H1 (cell line): ENCODE measurements at regions of chr14 and their contacts with region 1.

Region 1: DNA sequence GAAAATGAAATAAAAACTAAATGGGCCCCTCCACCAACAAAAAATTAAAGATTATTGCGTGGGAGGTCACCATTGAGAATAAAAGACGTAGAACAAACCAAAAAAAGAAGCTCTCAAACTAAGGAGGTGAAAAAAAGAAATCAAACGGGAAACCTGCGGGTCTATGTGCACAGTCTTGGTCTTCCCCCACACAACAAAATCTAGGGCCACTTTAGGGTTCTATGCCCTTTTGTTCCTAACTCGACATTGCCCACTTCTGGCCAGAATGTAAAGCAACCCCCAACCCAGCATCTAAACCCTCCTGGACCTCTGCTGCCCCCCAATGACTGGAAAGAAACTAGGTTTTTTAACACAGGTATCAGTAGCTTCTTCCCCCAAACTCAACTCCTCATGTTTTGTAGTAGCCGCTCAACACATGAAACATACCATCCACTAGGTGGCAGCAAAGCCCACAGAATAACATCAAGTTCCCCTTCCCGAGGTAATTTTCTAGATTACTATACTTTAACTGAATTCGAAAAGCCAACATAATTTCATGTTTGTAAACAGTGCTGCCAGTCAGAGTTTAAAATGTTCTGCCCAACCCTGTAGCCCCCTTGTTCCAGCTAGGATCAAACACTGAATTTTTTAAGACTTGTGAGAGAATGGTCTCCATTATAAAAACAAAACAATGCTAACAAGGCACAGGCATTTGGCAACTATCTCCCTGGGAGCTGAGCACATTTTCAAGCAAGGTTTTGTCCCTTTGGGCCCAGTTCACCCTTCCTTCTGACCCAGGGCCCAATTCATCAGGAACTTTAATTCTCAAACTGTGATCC is 18.7 kb downstream of the DAD1 start:
- DNase-seq: peak; percentile 78 to 79
- H3K4me3 ChIP-seq: peak overlapping the region in 1 of 4 experiments; percentile 26; a peak in 1 of 8 replicates
- H3K27ac ChIP-seq: peak overlapping the region; percentile 66
- H3K4me1 ChIP-seq: peaks cover 0 to 5% (median 1%) of the 10 kb centered on the region in 4 experiments; a peak in 3 of 7 replicates
- H3K27me3 ChIP-seq: no peaks in the 10 kb centered on the region
- CTCF ChIP-seq: peak; percentile 63 to 100 (median 97)
- EP300 ChIP-seq: peak in 1 of 2 experiments; percentile 73; a peak in 1 of 3 replicates
- POLR2A ChIP-seq: no peak
- RAD21 ChIP-seq: peak; percentile 83 to 89

Region 2: GRCh38 chr14:22472935-22473854 is 97.1 kb before region 1 on chr14:
- CTCF ChIA-PET with region 1: interaction called, 11 read pairs
- POLR2A ChIA-PET with region 1: no interaction called
- DNase-seq: peak in 1 of 2 experiments; percentile 66
- H3K4me3 ChIP-seq: no peak overlapping the region
- H3K27ac ChIP-seq: no peak overlapping the region
- H3K4me1 ChIP-seq: peaks cover 0 to 4% (median under 1%) of the 10 kb centered on the region in 4 experiments; a peak in 2 of 7 replicates
- H3K27me3 ChIP-seq: no peaks in the 10 kb centered on the region; a peak in 1 of 7 replicates
- CTCF ChIP-seq: peak in 2 of 3 experiments; percentile 63 to 75; a peak in 3 of 4 replicates
- EP300 ChIP-seq: no peak
- POLR2A ChIP-seq: no peak
- RAD21 ChIP-seq: peak; percentile 84 to 87

Region 3: GRCh38 chr14:22549981-22550673 is 20.2 kb before region 1 on chr14:
- CTCF ChIA-PET with region 1: interaction called, 38 read pairs
- POLR2A ChIA-PET with region 1: interaction called, 3 read pairs
- DNase-seq: peak in 1 of 2 experiments; percentile 43
- H3K4me3 ChIP-seq: no peak overlapping the region; a peak in 1 of 8 replicates
- H3K27ac ChIP-seq: peak overlapping the region; percentile 6; the same call in 1 of the 2 replicates
- H3K4me1 ChIP-seq: peaks cover 11 to 21% (median 14%) of the 10 kb centered on the region in 4 experiments
- H3K27me3 ChIP-seq: no peaks in the 10 kb centered on the region; a peak in 2 of 7 replicates
- CTCF ChIP-seq: no peak
- EP300 ChIP-seq: no peak
- POLR2A ChIP-seq: no peak
- RAD21 ChIP-seq: no peak

Region 4: DNA sequence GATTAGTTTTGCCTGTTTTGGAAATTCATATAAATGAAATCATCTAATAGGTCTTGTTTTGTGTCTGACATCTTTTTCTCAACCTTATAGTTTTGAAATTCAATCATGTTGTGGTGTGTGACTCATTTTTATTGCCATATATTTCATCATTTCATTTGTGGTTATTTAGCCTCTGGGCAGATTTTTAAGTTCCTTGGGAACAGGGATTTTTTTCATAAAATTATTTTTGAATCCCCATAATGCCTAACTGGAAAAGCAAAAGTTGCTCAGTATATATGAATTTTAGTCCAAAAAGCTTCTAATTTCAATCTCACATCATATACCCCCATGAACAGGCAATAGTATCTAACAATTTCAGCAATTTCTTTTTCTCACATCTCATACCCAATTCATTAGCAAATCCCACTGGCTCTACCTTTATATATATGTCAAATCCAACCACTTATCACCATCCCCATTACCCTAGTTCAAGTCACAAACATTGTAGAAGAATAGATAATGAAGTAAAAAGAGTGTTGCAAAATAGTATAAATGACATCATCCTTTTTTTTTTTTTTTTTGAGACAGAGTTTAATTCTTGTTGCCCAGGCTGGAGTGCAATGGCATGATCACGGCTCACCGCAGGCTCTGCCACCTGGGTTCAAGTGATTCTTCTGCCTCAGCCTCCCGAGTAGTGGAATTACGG is 76.4 kb after region 1 on chr14:
- CTCF ChIA-PET with region 1: interaction called, 78 read pairs
- POLR2A ChIA-PET with region 1: interaction called, 3 read pairs
- DNase-seq: no peak
- H3K4me3 ChIP-seq: no peak overlapping the region
- H3K27ac ChIP-seq: no peak overlapping the region
- H3K4me1 ChIP-seq: no peaks in the 10 kb centered on the region
- H3K27me3 ChIP-seq: no peaks in the 10 kb centered on the region
- CTCF ChIP-seq: no peak
- EP300 ChIP-seq: no peak
- POLR2A ChIP-seq: no peak
- RAD21 ChIP-seq: no peak

Region 5: GRCh38 chr14:22781586-22781991 is 211.2 kb after region 1 on chr14:
- CTCF ChIA-PET with region 1: interaction called, 13 read pairs
- POLR2A ChIA-PET with region 1: no interaction called
- DNase-seq: no peak
- H3K4me3 ChIP-seq: no peak overlapping the region
- H3K27ac ChIP-seq: no peak overlapping the region
- H3K4me1 ChIP-seq: no peaks in the 10 kb centered on the region; a peak in 1 of 7 replicates
- H3K27me3 ChIP-seq: no peaks in the 10 kb centered on the region
- CTCF ChIP-seq: no peak
- EP300 ChIP-seq: no peak
- POLR2A ChIP-seq: no peak
- RAD21 ChIP-seq: no peak

Region 6: DNA sequence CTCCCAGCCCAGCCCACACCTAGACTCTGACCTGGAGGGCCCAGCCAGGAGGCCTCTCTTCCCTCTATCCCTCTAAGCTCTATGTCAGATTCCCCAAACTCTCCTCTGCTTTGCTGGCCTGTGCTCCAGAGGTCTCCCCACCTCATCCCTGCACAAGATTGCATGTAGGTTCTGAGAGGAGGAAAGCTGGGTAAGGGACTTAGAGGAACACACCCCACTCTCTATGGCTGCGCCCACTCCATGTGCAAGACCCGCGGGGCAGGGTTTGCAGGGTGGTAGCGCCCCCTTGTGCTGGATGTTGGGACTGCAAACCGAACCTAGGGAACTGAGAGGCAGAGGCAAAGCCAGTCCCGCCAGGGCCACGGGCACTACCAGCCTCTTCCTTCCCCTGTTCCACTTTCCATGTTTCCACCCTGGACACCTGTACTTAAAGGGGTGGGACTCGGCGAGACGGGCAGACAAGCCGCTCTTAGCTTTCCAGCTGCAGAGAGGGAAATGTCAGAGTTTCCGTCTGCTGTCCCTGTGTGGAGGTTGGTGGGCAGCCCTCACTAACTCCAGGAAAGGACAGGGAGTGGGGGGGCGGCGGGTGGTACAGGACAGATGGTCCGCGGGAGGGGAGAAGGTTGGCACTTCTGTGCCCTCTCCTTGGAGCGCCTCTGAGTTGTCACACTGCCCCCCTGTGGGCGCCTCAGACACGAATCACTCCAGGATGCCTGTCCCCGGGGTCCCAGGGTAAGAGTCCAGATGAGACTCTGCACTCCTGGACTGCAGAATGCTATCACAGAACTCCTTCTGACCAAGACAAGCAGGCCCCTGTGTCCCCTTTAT is 282.8 kb after region 1 on chr14:
- CTCF ChIA-PET with region 1: interaction called, 23 read pairs
- POLR2A ChIA-PET with region 1: no interaction called
- DNase-seq: peak in 1 of 2 experiments; percentile 100
- H3K4me3 ChIP-seq: peak overlapping the region in 3 of 4 experiments; percentile 32 to 58 (median 42); a peak in 7 of 8 replicates
- H3K27ac ChIP-seq: no peak overlapping the region
- H3K4me1 ChIP-seq: peaks cover 0 to 17% (median 7%) of the 10 kb centered on the region in 4 experiments; a peak in 6 of 7 replicates
- H3K27me3 ChIP-seq: no peaks in the 10 kb centered on the region
- CTCF ChIP-seq: peak; percentile 95 to 97 (median 96)
- EP300 ChIP-seq: no peak
- POLR2A ChIP-seq: no peak; a peak in 1 of 3 replicates
- RAD21 ChIP-seq: peak; percentile 94 to 96